Psoas muscle (tissue), 8 donors: ENCODE measurements at regions of chr1 and their contacts with region 1.

Region 1: DNA sequence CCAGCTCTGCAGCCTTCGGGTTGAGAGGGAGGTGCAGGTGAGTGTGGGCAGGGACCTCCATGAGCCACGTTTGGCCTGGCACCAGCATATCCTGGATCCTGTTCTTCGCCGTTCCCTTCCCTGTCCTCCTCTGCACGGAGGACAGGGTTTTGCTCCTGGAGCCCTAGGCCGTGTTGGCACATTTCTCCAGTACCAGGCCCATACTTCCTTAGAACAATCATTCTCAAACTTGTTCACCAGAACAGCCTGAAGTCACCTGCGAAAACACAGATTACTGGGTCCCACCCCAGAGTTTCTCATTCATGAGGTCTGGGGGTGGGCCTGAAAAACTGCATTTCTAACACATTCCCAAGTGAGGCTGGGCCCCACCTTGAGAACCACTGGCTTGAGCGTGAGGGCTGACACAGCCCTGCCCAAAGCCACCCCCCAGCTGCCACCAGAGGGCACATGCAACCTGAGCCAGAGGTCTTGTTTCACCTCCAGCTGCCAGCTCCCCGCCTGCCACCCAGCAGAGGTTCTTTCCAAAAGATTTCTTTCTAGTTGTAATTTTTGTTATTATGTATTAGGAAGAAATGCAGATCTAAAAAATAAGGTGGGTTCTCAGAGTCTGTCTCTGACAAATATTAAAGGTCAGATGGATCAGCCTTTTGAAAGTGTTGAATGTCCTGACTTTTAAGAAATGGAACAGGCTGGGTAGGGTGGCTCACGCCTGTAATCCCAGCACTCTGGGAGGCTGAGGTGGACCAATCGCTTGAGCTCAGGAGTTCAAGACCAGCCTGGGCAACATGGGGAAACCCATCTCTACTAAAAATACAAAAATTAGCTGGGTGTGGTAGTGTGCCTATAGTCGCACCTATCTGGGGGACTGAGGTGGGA is 39.6 kb upstream of the LDLRAP1 start:
- DNase-seq: peak; percentile 46 to 83
- ATAC-seq: peak; percentile 87 to 94 (median 92)
- H3K4me3 ChIP-seq: no peak overlapping the region
- H3K27ac ChIP-seq: no peak overlapping the region
- H3K4me1 ChIP-seq: peaks cover 9% of the 10 kb centered on the region
- H3K27me3 ChIP-seq: no peaks in the 10 kb centered on the region
- CTCF ChIP-seq: peak; percentile 67

Region 2: DNA sequence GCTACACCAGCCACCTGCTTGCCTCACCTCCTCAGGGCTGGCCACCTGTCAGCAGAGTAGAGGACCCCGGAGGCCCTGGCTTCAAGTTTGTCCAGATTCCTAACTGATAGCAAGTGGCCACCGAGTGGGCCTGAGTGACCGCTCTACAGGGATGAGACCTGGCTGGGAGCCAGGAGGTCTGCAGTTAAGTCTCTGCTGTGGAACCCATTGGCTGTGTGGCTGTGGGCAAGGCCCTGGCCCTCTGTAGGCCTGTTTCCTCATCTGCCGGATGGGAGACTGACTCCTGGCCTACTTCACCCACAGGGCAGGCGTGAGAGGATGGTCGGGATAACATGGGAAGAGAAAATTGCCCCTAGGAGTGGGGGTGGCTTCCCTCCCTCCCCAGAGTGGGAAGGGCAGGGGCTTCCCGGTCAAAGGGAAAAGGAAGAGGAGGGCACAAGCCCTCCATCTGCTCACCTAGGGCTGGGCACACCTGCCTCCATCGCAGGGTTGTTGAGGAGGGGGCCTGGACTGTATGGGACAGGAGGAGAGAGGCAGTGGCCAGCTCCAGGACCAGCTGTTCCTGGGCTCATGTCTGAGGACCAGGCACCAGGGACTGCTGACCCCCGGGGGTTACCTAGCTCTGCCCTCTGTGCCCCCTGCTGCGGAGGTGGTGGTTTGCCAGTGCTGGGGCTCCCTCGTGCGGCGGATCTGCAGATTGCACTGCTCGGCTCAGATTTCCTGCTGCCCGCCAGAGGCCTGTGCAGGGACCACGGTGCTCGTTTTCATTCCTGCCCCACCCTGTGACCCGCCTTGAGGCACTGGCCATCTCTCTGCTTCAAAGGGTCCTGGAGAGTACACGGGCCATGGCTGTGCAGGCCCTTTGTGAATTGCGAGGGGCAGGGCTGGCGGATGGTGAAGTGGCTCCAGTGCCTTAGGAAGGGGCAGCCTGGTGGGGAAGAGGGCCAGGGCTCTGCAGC is 306.8 kb after region 1 on chr1:
- intact Hi-C with region 1: loop called (anchors 5 kb)
- DNase-seq: peak; percentile 74 to 88
- ATAC-seq: peak; percentile 58 to 81 (median 68)
- H3K4me3 ChIP-seq: no peak overlapping the region
- H3K27ac ChIP-seq: no peak overlapping the region
- H3K4me1 ChIP-seq: peaks cover 23% of the 10 kb centered on the region
- H3K27me3 ChIP-seq: no peaks in the 10 kb centered on the region
- CTCF ChIP-seq: peak; percentile 90

Region 3: DNA sequence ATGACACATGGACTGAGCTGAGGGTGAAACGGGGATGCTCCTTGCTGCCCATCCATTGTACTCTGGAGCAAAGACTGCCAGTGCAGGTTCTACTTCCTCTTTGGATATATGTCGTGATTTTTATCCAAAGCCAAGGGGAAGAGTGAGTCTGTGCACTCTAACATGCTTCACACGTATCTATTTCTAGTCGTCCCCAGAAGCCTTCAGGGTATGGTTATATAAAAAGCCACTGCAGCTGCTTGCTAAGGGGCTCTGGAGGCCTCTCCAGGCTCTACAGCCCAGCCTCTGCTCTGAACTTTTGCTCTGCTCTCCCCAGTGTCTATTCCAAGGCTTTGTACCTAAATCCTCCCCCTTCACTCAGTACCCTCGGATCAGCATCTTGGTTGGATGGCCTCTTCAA is 474.0 kb after region 1 on chr1:
- intact Hi-C with region 1: no loop called
- DNase-seq: no peak
- ATAC-seq: no peak
- H3K4me3 ChIP-seq: no peak overlapping the region
- H3K27ac ChIP-seq: no peak overlapping the region
- H3K4me1 ChIP-seq: no peaks in the 10 kb centered on the region
- H3K27me3 ChIP-seq: no peaks in the 10 kb centered on the region
- CTCF ChIP-seq: no peak

Region 4: DNA sequence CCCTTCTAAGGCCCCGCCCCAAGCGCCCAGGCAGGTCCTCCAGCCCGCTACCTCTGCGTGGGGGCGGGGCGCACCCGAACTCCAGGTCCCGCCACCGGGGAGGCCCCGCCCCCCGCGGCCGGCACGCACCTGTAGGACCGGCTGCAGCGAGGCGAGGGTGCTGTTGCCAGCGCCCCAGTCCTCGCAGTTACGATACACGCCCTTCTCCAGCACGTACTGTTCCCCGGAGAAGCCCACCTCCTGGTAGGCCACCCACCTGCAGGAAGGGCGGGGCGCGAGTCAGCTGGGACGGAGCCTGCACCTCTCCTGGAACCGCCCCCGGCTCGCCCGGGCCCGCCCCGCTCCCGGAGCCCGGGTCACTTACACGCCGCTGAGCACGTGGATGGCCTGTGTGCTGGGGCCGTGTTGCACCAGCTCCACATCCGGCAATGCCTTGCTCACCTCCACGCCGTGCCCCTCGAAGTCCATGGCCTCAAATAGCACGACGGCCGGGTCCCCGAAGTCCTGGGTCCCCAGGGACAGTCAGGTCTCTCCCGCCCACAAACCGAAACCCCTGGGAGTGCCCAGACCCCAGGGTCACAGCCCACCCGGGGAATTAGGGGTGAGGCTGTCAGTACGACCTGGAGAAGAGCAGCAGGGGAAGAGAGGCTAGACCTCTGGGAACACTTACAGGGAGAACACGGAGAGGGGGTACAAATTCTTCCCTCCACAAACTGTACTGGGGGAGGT is 832.9 kb after region 1 on chr1:
- intact Hi-C with region 1: no loop called
- DNase-seq: peak; percentile 63 to 80
- ATAC-seq: peak; percentile 70 to 89 (median 80)
- H3K4me3 ChIP-seq: peak overlapping the region; percentile 69
- H3K27ac ChIP-seq: no peak overlapping the region
- H3K4me1 ChIP-seq: peaks cover 11% of the 10 kb centered on the region
- H3K27me3 ChIP-seq: peaks cover 0 to 33% (median 2%) of the 10 kb centered on the region in 3 donors
- CTCF ChIP-seq: no peak